ENCODE measurements at regions of chr6 and their contacts with region 1.

Region 1: DNA sequence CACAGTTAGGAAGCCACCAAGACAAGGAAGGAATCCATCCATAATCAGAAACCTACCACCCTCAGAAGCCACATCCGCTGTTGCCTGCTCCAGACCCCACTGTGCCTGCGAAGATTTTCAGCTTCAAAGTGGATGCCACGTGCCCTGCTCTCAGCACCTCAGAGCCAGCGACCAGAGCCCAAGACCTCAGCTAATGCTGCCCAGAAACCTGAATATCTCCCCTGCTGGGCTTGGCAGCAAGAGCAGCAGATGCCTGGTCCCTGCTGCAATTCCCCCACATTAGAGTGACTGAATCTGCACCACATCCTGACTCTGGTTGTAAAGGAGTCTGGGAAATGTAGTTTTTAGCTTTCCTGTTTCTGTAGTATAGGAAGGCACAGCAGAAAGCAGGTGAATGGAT is 10.7 kb upstream of the ULBP3 start:
- DNase-seq: peak in 1 of 5 donors; percentile 21
- H3K4me3 ChIP-seq: no peak overlapping the region
- H3K27ac ChIP-seq: no peak overlapping the region
- H3K4me1 ChIP-seq: no peaks in the 10 kb centered on the region
- H3K27me3 ChIP-seq: no peaks in the 10 kb centered on the region
- CTCF ChIP-seq: no peak

Region 2: DNA sequence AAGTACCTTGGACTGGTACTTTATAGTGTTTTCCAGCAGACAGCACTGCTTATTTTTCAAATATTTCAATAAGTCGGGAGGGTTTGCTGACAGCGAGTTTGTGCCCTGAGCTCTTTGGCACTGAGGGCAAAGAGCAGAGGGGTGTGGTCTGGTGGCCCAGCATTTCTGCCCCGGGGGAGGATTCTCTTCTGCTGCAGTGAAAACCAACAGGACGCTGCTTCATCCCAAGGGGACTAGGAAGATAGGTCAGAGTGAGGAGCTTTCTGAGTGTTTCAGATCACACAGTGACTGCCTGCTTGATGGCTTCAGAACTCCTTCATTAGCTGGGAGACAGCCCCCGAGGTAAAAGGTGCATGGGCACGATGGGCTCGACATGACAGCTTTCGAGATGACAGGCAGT is 129.2 kb before region 1 on chr6:
- intact Hi-C with region 1: no loop called
- DNase-seq: no peak
- H3K4me3 ChIP-seq: no peak overlapping the region
- H3K27ac ChIP-seq: no peak overlapping the region
- H3K4me1 ChIP-seq: no peaks in the 10 kb centered on the region
- H3K27me3 ChIP-seq: peaks cover 35% of the 10 kb centered on the region
- CTCF ChIP-seq: no peak

Region 3: GRCh38 chr6:150334790-150335783 is 255.5 kb after region 1 on chr6:
- intact Hi-C with region 1: loop called (anchors 10 kb)
- DNase-seq: peak in 3 of 5 donors; percentile 56 to 82 (median 64)
- H3K4me3 ChIP-seq: no peak overlapping the region
- H3K27ac ChIP-seq: no peak overlapping the region
- H3K4me1 ChIP-seq: no peaks in the 10 kb centered on the region
- H3K27me3 ChIP-seq: no peaks in the 10 kb centered on the region
- CTCF ChIP-seq: peak; percentile 85

Region 4: GRCh38 chr6:150395398-150396009 is 315.9 kb after region 1 on chr6:
- intact Hi-C with region 1: loop called (anchors 10 kb)
- DNase-seq: peak in 4 of 5 donors; percentile 80 to 89 (median 82)
- H3K4me3 ChIP-seq: no peak overlapping the region
- H3K27ac ChIP-seq: no peak overlapping the region
- H3K4me1 ChIP-seq: no peaks in the 10 kb centered on the region
- H3K27me3 ChIP-seq: no peaks in the 10 kb centered on the region
- CTCF ChIP-seq: peak; percentile 81